ENCODE measurements at regions of chr3 and their contacts with region 1.

Region 1: GRCh38 chr3:111539351-111540331 is 2.4 kb upstream of the CD96 start:
- DNase-seq: peak; percentile 32 to 69 (median 57)
- ATAC-seq: peak; percentile 54
- H3K4me3 ChIP-seq: peak overlapping the region; percentile 40
- H3K4me3 Mint-ChIP-seq: peak overlapping the region; percentile 77 to 92 (median 82)
- H3K27ac ChIP-seq: peak overlapping the region; percentile 42
- H3K27ac Mint-ChIP-seq: peak overlapping the region in 5 of 9 donors; percentile 78 to 99 (median 98)
- H3K4me1 ChIP-seq: peaks cover 33 to 38% of the 10 kb centered on the region in 2 donors
- H3K4me1 Mint-ChIP-seq: peaks cover 27 to 65% (median 55%) of the 10 kb centered on the region in 7 donors
- H3K27me3 ChIP-seq: no peaks in the 10 kb centered on the region
- H3K27me3 Mint-ChIP-seq: no peaks in the 10 kb centered on the region

Region 2: GRCh38 chr3:110314512-110315114 is 1225.0 kb before region 1 on chr3:
- CTCF ChIA-PET with region 1: interaction called, 3 read pairs
- POLR2A ChIA-PET with region 1: no interaction called
- intact Hi-C with region 1: loop called (anchors 1 to 2 kb)
- DNase-seq: peak in 8 of 9 donors; percentile 25 to 66 (median 56)
- ATAC-seq: peak; percentile 76
- H3K4me3 ChIP-seq: no peak overlapping the region
- H3K4me3 Mint-ChIP-seq: peak overlapping the region in 1 of 10 donors; percentile 11
- H3K27ac ChIP-seq: no peak overlapping the region
- H3K27ac Mint-ChIP-seq: no peak overlapping the region
- H3K4me1 ChIP-seq: no peaks in the 10 kb centered on the region
- H3K4me1 Mint-ChIP-seq: peaks cover 0 to 5% (median 0%) of the 10 kb centered on the region in 7 donors
- H3K27me3 ChIP-seq: no peaks in the 10 kb centered on the region
- H3K27me3 Mint-ChIP-seq: peaks cover 0 to 6% (median 0%) of the 10 kb centered on the region in 5 donors

Region 3: GRCh38 chr3:111071257-111072015 is 468.2 kb before region 1 on chr3 and contains the start of gene NECTIN3:
- CTCF ChIA-PET with region 1: no interaction called
- POLR2A ChIA-PET with region 1: no interaction called
- intact Hi-C with region 1: loop called (anchors 1 to 2 kb)
- DNase-seq: peak; percentile 59 to 89 (median 80)
- ATAC-seq: peak; percentile 96
- H3K4me3 ChIP-seq: peak within 1 kb of the TSS; percentile 76
- H3K4me3 Mint-ChIP-seq: peak within 1 kb of the TSS; percentile 90 to 98 (median 94)
- H3K27ac ChIP-seq: peak within 1 kb of the TSS; percentile 52
- H3K27ac Mint-ChIP-seq: peak within 1 kb of the TSS; percentile 63 to 91 (median 87)
- H3K4me1 ChIP-seq: peaks cover 9% of the 10 kb centered on the region in 2 donors
- H3K4me1 Mint-ChIP-seq: peaks cover 24 to 34% (median 26%) of the 10 kb centered on the region in 7 donors
- H3K27me3 ChIP-seq: peaks cover 0 to 6% of the 10 kb centered on the region in 2 donors
- H3K27me3 Mint-ChIP-seq: peaks cover 29 to 64% (median 36%) of the 10 kb centered on the region in 5 donors
- total RNA-seq, gene NECTIN3: 2.4 to 7.2 (median 4.6) TPM

Region 4: GRCh38 chr3:111311709-111312235 is 227.9 kb before region 1 on chr3:
- CTCF ChIA-PET with region 1: no interaction called
- POLR2A ChIA-PET with region 1: interaction called, 4 read pairs
- intact Hi-C with region 1: loop called (anchors 2 to 5 kb)
- DNase-seq: peak in 1 of 9 donors; percentile 19
- ATAC-seq: peak; percentile 62
- H3K4me3 ChIP-seq: no peak overlapping the region
- H3K4me3 Mint-ChIP-seq: peak overlapping the region in 8 of 10 donors; percentile 15 to 76 (median 56)
- H3K27ac ChIP-seq: peak overlapping the region; percentile 63
- H3K27ac Mint-ChIP-seq: peak overlapping the region in 7 of 9 donors; percentile 79 to 99 (median 92)
- H3K4me1 ChIP-seq: peaks cover 22 to 51% of the 10 kb centered on the region in 2 donors
- H3K4me1 Mint-ChIP-seq: peaks cover 0 to 57% (median 0%) of the 10 kb centered on the region in 7 donors
- H3K27me3 ChIP-seq: no peaks in the 10 kb centered on the region
- H3K27me3 Mint-ChIP-seq: no peaks in the 10 kb centered on the region

Region 5: GRCh38 chr3:111610189-111610588 is 70.5 kb after region 1 on chr3:
- CTCF ChIA-PET with region 1: interaction called, 3 read pairs
- POLR2A ChIA-PET with region 1: interaction called, 5 read pairs
- intact Hi-C with region 1: loop called (anchors 1 kb)
- DNase-seq: peak in 7 of 9 donors; percentile 79 to 91 (median 89)
- ATAC-seq: peak; percentile 94
- H3K4me3 ChIP-seq: peak overlapping the region; percentile 2
- H3K4me3 Mint-ChIP-seq: peak overlapping the region; percentile 48 to 84 (median 74)
- H3K27ac ChIP-seq: peak overlapping the region; percentile 47
- H3K27ac Mint-ChIP-seq: peak overlapping the region; percentile 41 to 96 (median 90)
- H3K4me1 ChIP-seq: peaks cover 27 to 38% of the 10 kb centered on the region in 2 donors
- H3K4me1 Mint-ChIP-seq: peaks cover 32 to 90% (median 61%) of the 10 kb centered on the region in 7 donors
- H3K27me3 ChIP-seq: no peaks in the 10 kb centered on the region
- H3K27me3 Mint-ChIP-seq: no peaks in the 10 kb centered on the region

Region 6: GRCh38 chr3:111978493-111979433 is 439.1 kb after region 1 on chr3 and contains the start of gene ABHD10:
- CTCF ChIA-PET with region 1: no interaction called
- POLR2A ChIA-PET with region 1: no interaction called
- intact Hi-C with region 1: loop called (anchors 2 kb)
- DNase-seq: peak; percentile 90 to 97 (median 93)
- ATAC-seq: peak; percentile 95
- H3K4me3 ChIP-seq: peak within 1 kb of the TSS; percentile 83
- H3K4me3 Mint-ChIP-seq: peak within 1 kb of the TSS; percentile 82 to 97 (median 92)
- H3K27ac ChIP-seq: peak within 1 kb of the TSS; percentile 75
- H3K27ac Mint-ChIP-seq: peak within 1 kb of the TSS; percentile 92 to 96 (median 94)
- H3K4me1 ChIP-seq: peaks cover 16 to 24% of the 10 kb centered on the region in 2 donors
- H3K4me1 Mint-ChIP-seq: peaks cover 19 to 54% (median 44%) of the 10 kb centered on the region in 7 donors
- H3K27me3 ChIP-seq: no peaks in the 10 kb centered on the region
- H3K27me3 Mint-ChIP-seq: peaks cover 0 to 25% (median 0%) of the 10 kb centered on the region in 5 donors
- total RNA-seq, gene ABHD10: 18.4 to 43.6 (median 34.9) TPM

Region 7: DNA sequence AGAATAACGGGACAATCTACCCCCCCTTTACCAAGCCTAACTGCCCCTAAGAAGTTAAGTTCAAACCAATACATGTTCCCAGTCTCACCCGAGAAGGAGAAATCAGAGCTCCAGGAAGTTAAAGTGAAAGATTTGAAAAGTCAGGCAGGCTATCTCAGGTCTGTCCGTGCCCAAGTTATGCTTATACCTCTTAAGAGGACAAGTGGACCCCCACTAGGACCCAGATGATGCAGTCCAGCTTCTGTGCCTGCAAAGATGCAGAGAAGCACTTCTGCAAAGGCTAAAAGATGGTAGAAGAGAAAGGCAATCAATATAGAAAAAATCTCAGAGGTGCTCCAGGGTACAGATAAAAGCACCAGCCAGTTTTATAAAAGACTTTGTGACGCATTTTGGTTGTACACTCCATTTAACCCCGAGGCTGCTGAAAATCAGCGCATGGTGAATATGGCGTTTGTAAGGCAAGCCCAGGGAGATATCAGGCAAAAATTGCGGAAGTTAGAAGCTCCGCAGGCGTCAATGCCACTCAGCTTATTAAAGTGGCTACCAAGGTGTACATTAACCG is 764.2 kb after region 1 on chr3:
- CTCF ChIA-PET with region 1: no interaction called
- POLR2A ChIA-PET with region 1: no interaction called
- intact Hi-C with region 1: no loop called
- DNase-seq: peak in 7 of 9 donors; percentile 34 to 59 (median 43)
- ATAC-seq: peak; percentile 75
- H3K4me3 ChIP-seq: peak overlapping the region; percentile 82
- H3K4me3 Mint-ChIP-seq: no peak overlapping the region
- H3K27ac ChIP-seq: peak overlapping the region; percentile 61
- H3K27ac Mint-ChIP-seq: no peak overlapping the region
- H3K4me1 ChIP-seq: peaks cover 5 to 18% of the 10 kb centered on the region in 2 donors
- H3K4me1 Mint-ChIP-seq: peaks cover 0 to 3% (median under 1%) of the 10 kb centered on the region in 7 donors
- H3K27me3 ChIP-seq: no peaks in the 10 kb centered on the region
- H3K27me3 Mint-ChIP-seq: no peaks in the 10 kb centered on the region

Region 8: GRCh38 chr3:112676659-112677234 is 1137.1 kb after region 1 on chr3:
- CTCF ChIA-PET with region 1: no interaction called
- POLR2A ChIA-PET with region 1: no interaction called
- intact Hi-C with region 1: loop called in 1 of 2 experiments (anchors 10 kb)
- DNase-seq: peak in 7 of 9 donors; percentile 5 to 76 (median 30)
- ATAC-seq: peak; percentile 94
- H3K4me3 ChIP-seq: no peak overlapping the region
- H3K4me3 Mint-ChIP-seq: peak overlapping the region in 4 of 10 donors; percentile 11 to 80 (median 16)
- H3K27ac ChIP-seq: no peak overlapping the region
- H3K27ac Mint-ChIP-seq: peak overlapping the region in 5 of 9 donors; percentile 20 to 94 (median 24)
- H3K4me1 ChIP-seq: peaks cover 23 to 39% of the 10 kb centered on the region in 2 donors
- H3K4me1 Mint-ChIP-seq: peaks cover 30 to 69% (median 34%) of the 10 kb centered on the region in 7 donors
- H3K27me3 ChIP-seq: no peaks in the 10 kb centered on the region
- H3K27me3 Mint-ChIP-seq: no peaks in the 10 kb centered on the region

Measured in naive thymus-derived CD4-positive, alpha-beta T cell (primary cell).